Prostate gland (tissue), 2 donors: ENCODE measurements at regions of chr1 and their contacts with region 1.

Region 1: GRCh38 chr1:70221241-70222121 is at the start of gene SRSF11:
- DNase-seq: peak; percentile 96
- H3K4me3 ChIP-seq: peak within 1 kb of the TSS; percentile 75 to 76
- H3K27ac ChIP-seq: peak within 1 kb of the TSS; percentile 97 to 98
- H3K4me1 ChIP-seq: peaks cover 6% of the 10 kb centered on the region
- H3K27me3 ChIP-seq: no peaks in the 10 kb centered on the region
- CTCF ChIP-seq: peak in 2 of 4 experiments; percentile 20 to 31
- POLR2A ChIP-seq: peak; percentile 92
- total RNA-seq, gene SRSF11: 71.5 to 135 TPM

Region 2: DNA sequence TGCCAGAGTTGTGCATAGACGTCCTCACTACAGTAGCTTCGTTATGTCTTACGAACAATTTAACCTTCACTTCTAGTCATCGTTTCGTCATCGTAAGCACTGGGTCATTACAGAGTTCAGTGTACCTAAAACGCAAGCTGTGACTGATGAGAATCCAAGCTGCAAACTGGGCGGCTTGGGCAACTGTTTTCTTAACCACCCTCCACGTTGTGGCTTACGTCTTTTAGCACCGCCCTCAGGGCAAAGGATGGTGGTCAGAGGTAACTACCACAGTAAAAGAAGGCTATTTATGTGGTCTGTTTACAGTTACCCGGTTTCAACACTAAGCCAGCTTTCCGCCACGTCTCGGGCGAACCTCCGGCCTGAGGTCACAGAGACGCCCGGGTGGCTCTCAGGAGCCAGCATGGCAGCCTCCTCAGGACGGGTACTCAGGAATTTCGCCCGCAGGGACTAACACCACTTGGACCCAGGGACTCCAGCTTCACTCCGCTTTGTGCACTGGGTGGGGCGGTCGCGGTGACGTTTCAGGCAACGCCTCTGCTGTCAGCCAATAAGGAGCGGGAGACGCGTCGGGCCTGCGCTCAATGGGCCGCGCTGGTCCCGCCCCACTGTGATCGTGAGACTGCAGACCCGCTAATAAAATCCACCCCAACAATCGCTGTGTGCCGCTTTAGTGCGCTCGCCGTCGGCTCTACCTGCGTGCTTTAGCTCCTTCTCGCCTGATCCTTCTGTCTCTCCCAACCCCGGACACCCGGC is 189.3 kb after region 1 on chr1 and contains the start of gene CTH:
- intact Hi-C with region 1: loop called (anchors 5 kb)
- DNase-seq: peak; percentile 98
- H3K4me3 ChIP-seq: peak within 1 kb of the TSS; percentile 64 to 76
- H3K27ac ChIP-seq: peak within 1 kb of the TSS; percentile 96 to 99
- H3K4me1 ChIP-seq: no peaks in the 10 kb centered on the region
- H3K27me3 ChIP-seq: no peaks in the 10 kb centered on the region
- CTCF ChIP-seq: peak in 2 of 4 experiments; percentile 10 to 17
- POLR2A ChIP-seq: peak; percentile 93
- total RNA-seq, gene CTH: 8.1 to 12.7 TPM